CD4-positive, alpha-beta T cell (primary cell): ENCODE measurements at regions of chr1 and their contacts with region 1.

Region 1: GRCh38 chr1:101309334-101310311 is 72.8 kb downstream of the S1PR1 start:
- DNase-seq: peak; percentile 53 to 94 (median 74)
- ATAC-seq: peak; percentile 76
- H3K4me3 ChIP-seq: peak overlapping the region; percentile 52
- H3K4me3 Mint-ChIP-seq: peak overlapping the region; percentile 76
- H3K27ac ChIP-seq: peak overlapping the region; percentile 82 to 88
- H3K27ac Mint-ChIP-seq: peak overlapping the region; percentile 96
- H3K4me1 ChIP-seq: peaks cover 56% of the 10 kb centered on the region
- H3K4me1 Mint-ChIP-seq: peaks cover 66% of the 10 kb centered on the region
- H3K27me3 ChIP-seq: no peaks in the 10 kb centered on the region
- H3K27me3 Mint-ChIP-seq: no peaks in the 10 kb centered on the region
- CTCF ChIP-seq: peak; percentile 89

Region 2: GRCh38 chr1:100921109-100921706 is 388.4 kb before region 1 on chr1:
- CTCF ChIA-PET with region 1: interaction called, 4 read pairs
- POLR2A ChIA-PET with region 1: interaction called, 5 read pairs
- intact Hi-C with region 1: loop called in 1 of 2 experiments (anchors 2 kb)
- DNase-seq: peak in 4 of 14 experiments; percentile 19 to 80 (median 74)
- ATAC-seq: no peak
- H3K4me3 ChIP-seq: no peak overlapping the region
- H3K4me3 Mint-ChIP-seq: no peak overlapping the region
- H3K27ac ChIP-seq: no peak overlapping the region
- H3K27ac Mint-ChIP-seq: peak overlapping the region; percentile 71
- H3K4me1 ChIP-seq: peaks cover 28% of the 10 kb centered on the region
- H3K4me1 Mint-ChIP-seq: peaks cover 39% of the 10 kb centered on the region
- H3K27me3 ChIP-seq: no peaks in the 10 kb centered on the region
- H3K27me3 Mint-ChIP-seq: no peaks in the 10 kb centered on the region
- CTCF ChIP-seq: peak; percentile 97

Region 3: DNA sequence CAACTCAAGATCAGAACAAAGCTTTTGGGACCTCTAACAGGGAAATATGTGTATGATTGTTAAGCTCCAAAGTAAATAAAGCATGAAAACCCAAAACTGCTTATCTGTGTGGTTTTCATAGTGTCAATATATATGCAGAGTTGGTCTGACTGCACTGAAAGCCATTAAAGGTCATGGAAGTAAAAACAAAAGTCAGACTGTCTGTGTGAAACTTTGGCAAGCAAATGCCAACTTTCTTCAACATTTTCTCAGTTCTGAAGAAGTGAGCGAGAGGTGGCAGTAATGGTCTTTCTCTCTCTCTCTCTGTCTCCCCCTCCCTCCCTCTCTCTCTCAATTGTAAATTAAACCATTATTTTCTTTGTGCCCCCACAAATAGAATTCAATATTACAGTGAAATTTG is 172.9 kb before region 1 on chr1:
- CTCF ChIA-PET with region 1: interaction called, 10 read pairs
- POLR2A ChIA-PET with region 1: interaction called, 5 read pairs
- intact Hi-C with region 1: no loop called
- DNase-seq: peak in 4 of 14 experiments; percentile 53 to 75 (median 64)
- ATAC-seq: peak; percentile 81
- H3K4me3 ChIP-seq: no peak overlapping the region
- H3K4me3 Mint-ChIP-seq: peak overlapping the region; percentile 40
- H3K27ac ChIP-seq: no peak overlapping the region
- H3K27ac Mint-ChIP-seq: peak overlapping the region; percentile 72
- H3K4me1 ChIP-seq: peaks cover 12% of the 10 kb centered on the region
- H3K4me1 Mint-ChIP-seq: peaks cover 65% of the 10 kb centered on the region
- H3K27me3 ChIP-seq: no peaks in the 10 kb centered on the region
- H3K27me3 Mint-ChIP-seq: no peaks in the 10 kb centered on the region
- CTCF ChIP-seq: peak; percentile 52

Region 4: GRCh38 chr1:101298663-101299062 is 11.0 kb before region 1 on chr1:
- CTCF ChIA-PET with region 1: interaction called, 6 read pairs
- POLR2A ChIA-PET with region 1: interaction called, 19 read pairs
- intact Hi-C with region 1: no loop called
- DNase-seq: peak in 1 of 14 experiments; percentile 55
- ATAC-seq: peak; percentile 41
- H3K4me3 ChIP-seq: no peak overlapping the region
- H3K4me3 Mint-ChIP-seq: no peak overlapping the region
- H3K27ac ChIP-seq: no peak overlapping the region
- H3K27ac Mint-ChIP-seq: peak overlapping the region; percentile 63
- H3K4me1 ChIP-seq: peaks cover 30% of the 10 kb centered on the region
- H3K4me1 Mint-ChIP-seq: peaks cover 43% of the 10 kb centered on the region
- H3K27me3 ChIP-seq: no peaks in the 10 kb centered on the region
- H3K27me3 Mint-ChIP-seq: no peaks in the 10 kb centered on the region
- CTCF ChIP-seq: no peak

Region 5: GRCh38 chr1:101357444-101357986 is 47.9 kb after region 1 on chr1:
- CTCF ChIA-PET with region 1: interaction called, 48 read pairs
- POLR2A ChIA-PET with region 1: interaction called, 50 read pairs
- intact Hi-C with region 1: loop called (anchors 1 kb)
- DNase-seq: peak; percentile 43 to 92 (median 60)
- ATAC-seq: peak; percentile 100
- H3K4me3 ChIP-seq: no peak overlapping the region
- H3K4me3 Mint-ChIP-seq: no peak overlapping the region
- H3K27ac ChIP-seq: no peak overlapping the region
- H3K27ac Mint-ChIP-seq: peak overlapping the region; percentile 5
- H3K4me1 ChIP-seq: peaks cover 7% of the 10 kb centered on the region
- H3K4me1 Mint-ChIP-seq: peaks cover 9% of the 10 kb centered on the region
- H3K27me3 ChIP-seq: no peaks in the 10 kb centered on the region
- H3K27me3 Mint-ChIP-seq: no peaks in the 10 kb centered on the region
- CTCF ChIP-seq: peak; percentile 84